Cardiac septum (tissue), 1 donor: ENCODE measurements at regions of chr17 and their contacts with region 1.

Region 1: GRCh38 chr17:57142925-57143324 is 57.9 kb downstream of the AKAP1 start:
- DNase-seq: no peak

Region 2: GRCh38 chr17:57201481-57201880 is 58.6 kb after region 1 on chr17:
- intact Hi-C with region 1: loop called (anchors 10 kb)
- DNase-seq: no peak

Region 3: GRCh38 chr17:57234751-57235117 is 91.8 kb after region 1 on chr17:
- intact Hi-C with region 1: loop called (anchors 10 kb)
- DNase-seq: no peak